MCF 10A (cell line): ENCODE measurements at regions of chr10 and their contacts with region 1.

Region 1: GRCh38 chr10:4704034-4704545 is 121.9 kb upstream of the AKR1E2 start:
- DNase-seq: peak; percentile 88
- H3K4me3 Mint-ChIP-seq: peak overlapping the region; percentile 49
- H3K27ac Mint-ChIP-seq: peak overlapping the region; percentile 94
- H3K4me1 Mint-ChIP-seq: peaks cover 12% of the 10 kb centered on the region
- H3K27me3 Mint-ChIP-seq: no peaks in the 10 kb centered on the region
- CTCF ChIP-seq: no peak

Region 2: DNA sequence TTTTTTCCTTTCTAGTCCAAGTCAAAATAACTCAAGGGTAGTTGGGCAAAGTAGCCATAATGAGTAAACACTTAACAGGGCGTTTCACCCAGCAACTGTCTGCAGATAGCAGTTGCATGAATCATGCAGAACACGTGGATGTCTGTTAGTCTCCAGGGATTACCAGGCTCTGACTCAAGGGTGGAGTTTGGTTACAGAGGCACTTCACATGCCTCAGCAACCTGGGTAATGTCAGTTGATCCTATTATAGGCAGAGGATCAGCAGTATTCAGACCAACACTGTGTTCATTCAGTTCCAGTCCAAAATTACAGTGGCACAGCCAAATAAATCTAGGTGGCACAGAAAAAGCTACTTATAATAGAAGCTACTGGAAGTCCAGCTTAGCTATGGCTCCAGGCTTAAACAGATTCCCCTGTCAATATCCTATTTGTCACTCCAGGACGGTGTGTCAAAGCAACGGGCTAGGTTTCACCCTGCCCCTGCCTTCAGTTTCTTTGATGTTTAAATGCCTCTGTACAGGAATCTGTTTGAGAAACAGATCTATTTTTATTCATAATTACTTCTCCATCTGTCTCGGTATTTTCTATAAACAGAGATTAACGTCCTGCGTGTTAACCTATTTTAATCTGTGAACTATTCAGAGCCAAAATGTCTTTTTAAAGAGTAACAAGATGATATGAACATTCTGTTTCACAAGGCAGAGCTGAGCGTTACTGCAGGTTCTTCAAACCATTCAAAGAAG is 40.8 kb before region 1 on chr10:
- CTCF ChIA-PET with region 1: no interaction called
- POLR2A ChIA-PET with region 1: interaction called, 22 read pairs
- intact Hi-C with region 1: no loop called
- DNase-seq: peak; percentile 99
- H3K4me3 Mint-ChIP-seq: peak overlapping the region; percentile 66
- H3K27ac Mint-ChIP-seq: peak overlapping the region; percentile 100
- H3K4me1 Mint-ChIP-seq: peaks cover 28% of the 10 kb centered on the region
- H3K27me3 Mint-ChIP-seq: no peaks in the 10 kb centered on the region
- CTCF ChIP-seq: no peak

Region 3: GRCh38 chr10:4678023-4678950 is 25.8 kb before region 1 on chr10:
- CTCF ChIA-PET with region 1: interaction called, 3 read pairs
- POLR2A ChIA-PET with region 1: interaction called, 46 read pairs
- intact Hi-C with region 1: loop called (anchors 2 kb)
- DNase-seq: peak; percentile 81
- H3K4me3 Mint-ChIP-seq: peak overlapping the region; percentile 58
- H3K27ac Mint-ChIP-seq: peak overlapping the region; percentile 90
- H3K4me1 Mint-ChIP-seq: peaks cover 33% of the 10 kb centered on the region
- H3K27me3 Mint-ChIP-seq: no peaks in the 10 kb centered on the region
- CTCF ChIP-seq: no peak

Region 4: DNA sequence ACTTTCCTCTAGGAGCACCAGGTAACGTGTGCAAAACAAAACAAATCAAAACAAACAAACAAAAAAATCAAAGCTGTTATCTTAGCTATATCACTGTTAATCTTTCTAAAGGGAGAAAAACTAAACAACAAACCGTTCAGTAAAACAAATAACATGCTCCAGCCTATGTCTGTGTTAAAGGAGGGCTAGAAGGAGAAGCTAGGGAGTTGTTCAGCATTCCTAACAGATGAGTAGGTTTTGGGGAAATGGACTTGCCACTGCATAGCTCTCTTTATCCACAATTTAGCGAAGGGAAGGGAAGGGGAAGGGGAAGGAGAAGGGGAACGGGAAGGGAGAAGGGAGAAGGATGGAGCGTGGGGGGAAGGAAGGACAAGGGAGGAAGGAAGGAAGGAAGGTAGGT is 12.3 kb before region 1 on chr10:
- CTCF ChIA-PET with region 1: no interaction called
- POLR2A ChIA-PET with region 1: interaction called, 16 read pairs
- intact Hi-C with region 1: no loop called
- DNase-seq: peak; percentile 32
- H3K4me3 Mint-ChIP-seq: no peak overlapping the region
- H3K27ac Mint-ChIP-seq: peak overlapping the region; percentile 97
- H3K4me1 Mint-ChIP-seq: peaks cover 31% of the 10 kb centered on the region
- H3K27me3 Mint-ChIP-seq: no peaks in the 10 kb centered on the region
- CTCF ChIP-seq: no peak

Region 5: DNA sequence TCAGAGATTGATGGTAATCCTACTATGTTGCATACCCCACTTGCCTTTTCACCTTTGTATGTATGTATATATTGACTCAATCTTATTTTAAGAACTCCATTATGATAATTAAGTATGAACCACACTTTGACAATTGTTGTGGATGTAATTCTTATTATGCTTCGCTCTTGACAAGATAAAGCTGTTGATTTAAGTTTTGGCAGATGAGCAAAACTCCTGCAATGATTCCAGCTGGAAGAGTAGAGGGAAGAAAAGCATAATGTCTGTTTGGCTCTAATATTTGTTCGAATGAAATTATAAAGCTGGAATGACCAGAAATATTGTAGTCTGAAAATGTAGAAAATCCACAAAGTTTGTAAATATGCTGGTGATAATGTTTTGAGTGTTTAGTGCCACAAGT is 38.1 kb after region 1 on chr10:
- CTCF ChIA-PET with region 1: no interaction called
- POLR2A ChIA-PET with region 1: no interaction called
- intact Hi-C with region 1: no loop called
- DNase-seq: no peak
- H3K4me3 Mint-ChIP-seq: no peak overlapping the region
- H3K27ac Mint-ChIP-seq: no peak overlapping the region
- H3K4me1 Mint-ChIP-seq: no peaks in the 10 kb centered on the region
- H3K27me3 Mint-ChIP-seq: no peaks in the 10 kb centered on the region
- CTCF ChIP-seq: no peak

Region 6: DNA sequence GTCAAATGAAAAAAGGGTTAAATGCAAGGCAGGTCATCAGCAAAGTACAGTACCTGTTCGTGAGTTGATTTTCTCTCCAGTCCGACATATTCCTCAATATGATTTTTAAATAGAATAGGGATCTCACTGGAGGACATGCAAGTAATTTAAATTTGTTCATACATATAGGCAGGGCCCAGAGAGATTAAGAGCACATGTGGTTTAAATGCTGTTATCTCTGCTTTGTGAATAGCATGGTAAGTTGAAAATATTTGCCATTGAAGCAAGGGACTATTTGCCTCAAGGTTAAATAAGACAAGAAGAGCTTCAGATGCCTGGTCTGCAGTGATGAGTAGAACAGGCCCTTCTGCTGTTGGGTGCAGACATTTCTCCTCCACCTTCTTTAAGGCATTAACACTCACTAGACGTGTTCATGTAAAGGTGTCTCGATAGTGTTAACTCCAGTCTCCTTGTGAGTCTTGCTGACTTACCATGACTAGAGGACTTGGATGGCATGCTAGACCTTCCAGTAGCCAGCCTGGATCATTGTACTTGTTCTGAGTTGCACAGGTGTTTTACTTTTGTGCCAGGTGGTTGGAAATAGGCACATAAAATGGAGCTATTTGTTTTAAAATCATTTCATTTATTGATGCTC is 374.6 kb after region 1 on chr10:
- CTCF ChIA-PET with region 1: no interaction called
- POLR2A ChIA-PET with region 1: no interaction called
- intact Hi-C with region 1: no loop called
- DNase-seq: peak; percentile 63
- H3K4me3 Mint-ChIP-seq: no peak overlapping the region
- H3K27ac Mint-ChIP-seq: no peak overlapping the region
- H3K4me1 Mint-ChIP-seq: peaks cover 15% of the 10 kb centered on the region
- H3K27me3 Mint-ChIP-seq: no peaks in the 10 kb centered on the region
- CTCF ChIP-seq: no peak